Natural killer cell (primary cell): ENCODE measurements at regions of chrX and their contacts with region 1.

Region 1: GRCh38 chrX:23782863-23783568 is at the start of gene SAT1:
- DNase-seq: peak; percentile 89 to 95
- ATAC-seq: peak; percentile 81 to 94 (median 88)
- H3K4me3 ChIP-seq: peak within 1 kb of the TSS; percentile 97
- H3K4me3 Mint-ChIP-seq: peak within 1 kb of the TSS; percentile 95
- H3K27ac ChIP-seq: peak within 1 kb of the TSS; percentile 97
- H3K27ac Mint-ChIP-seq: peak within 1 kb of the TSS; percentile 93 to 95
- H3K4me1 ChIP-seq: peaks cover 20% of the 10 kb centered on the region
- H3K4me1 Mint-ChIP-seq: peaks cover 27 to 36% of the 10 kb centered on the region in 2 donors
- H3K27me3 ChIP-seq: no peaks in the 10 kb centered on the region
- H3K27me3 Mint-ChIP-seq: no peaks in the 10 kb centered on the region
- CTCF ChIP-seq: peak; percentile 68
- total RNA-seq, gene SAT1: 276 to 667 (median 524) TPM

Region 2: GRCh38 chrX:23598561-23598960 is 184.5 kb before region 1 on chrX:
- intact Hi-C with region 1: no loop called
- DNase-seq: no peak
- ATAC-seq: no peak
- H3K4me3 ChIP-seq: no peak overlapping the region
- H3K4me3 Mint-ChIP-seq: no peak overlapping the region
- H3K27ac ChIP-seq: no peak overlapping the region
- H3K27ac Mint-ChIP-seq: no peak overlapping the region
- H3K4me1 ChIP-seq: no peaks in the 10 kb centered on the region
- H3K4me1 Mint-ChIP-seq: no peaks in the 10 kb centered on the region
- H3K27me3 ChIP-seq: no peaks in the 10 kb centered on the region
- H3K27me3 Mint-ChIP-seq: peaks cover 2 to 19% of the 10 kb centered on the region in 2 donors
- CTCF ChIP-seq: no peak

Region 3: DNA sequence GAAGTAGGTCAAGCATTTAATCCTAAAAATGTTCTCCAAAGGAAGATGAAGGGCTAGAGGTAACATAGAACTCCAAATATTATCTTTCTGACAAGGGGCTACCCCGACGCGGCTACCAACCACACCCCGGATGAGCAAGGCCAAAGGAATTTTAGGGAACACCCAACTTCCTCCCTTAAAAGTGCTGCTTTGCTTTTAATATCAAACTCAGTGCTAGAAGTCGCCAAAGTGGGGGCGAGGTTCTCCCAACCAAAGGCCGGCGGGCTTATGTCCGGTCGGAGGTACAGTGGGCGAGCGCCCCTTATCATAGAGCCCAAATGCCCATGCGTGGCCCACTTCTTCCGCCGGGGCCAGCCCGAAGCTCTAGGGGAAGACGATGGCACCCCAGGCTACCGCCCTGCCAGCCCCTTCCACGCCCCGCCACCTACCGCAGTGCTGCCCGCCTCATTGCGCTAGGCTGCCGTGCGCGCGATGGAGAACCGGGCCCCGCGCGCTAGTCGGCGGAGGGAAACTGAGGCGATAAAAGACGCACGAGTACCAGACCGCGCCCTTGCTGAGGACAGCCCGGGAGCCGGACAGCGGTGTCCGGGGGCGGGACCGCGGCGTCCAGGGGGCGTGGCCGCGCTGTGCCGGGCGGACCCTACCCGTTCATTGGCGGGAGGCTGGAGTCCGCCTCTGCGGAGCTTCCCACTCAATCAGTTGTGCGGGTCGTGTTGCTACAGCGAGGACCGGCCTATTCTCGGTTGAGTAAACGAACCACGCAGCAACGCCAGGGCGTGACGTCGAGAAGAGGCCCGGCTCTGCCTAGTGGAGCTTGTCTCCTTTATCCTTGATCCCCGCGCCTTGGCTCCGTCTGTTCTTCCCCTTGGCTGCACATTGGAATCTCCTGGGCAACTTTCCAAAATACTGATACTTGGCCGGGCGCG is 40.1 kb before region 1 on chrX and contains the start of gene ACOT9:
- intact Hi-C with region 1: loop called (anchors 5 kb)
- DNase-seq: peak; percentile 69 to 76
- ATAC-seq: peak; percentile 95 to 99 (median 95)
- H3K4me3 ChIP-seq: peak within 1 kb of the TSS; percentile 69
- H3K4me3 Mint-ChIP-seq: peak within 1 kb of the TSS; percentile 81
- H3K27ac ChIP-seq: peak within 1 kb of the TSS; percentile 77
- H3K27ac Mint-ChIP-seq: peak within 1 kb of the TSS; percentile 54 to 87
- H3K4me1 ChIP-seq: peaks cover 27% of the 10 kb centered on the region
- H3K4me1 Mint-ChIP-seq: peaks cover 14 to 16% of the 10 kb centered on the region in 2 donors
- H3K27me3 ChIP-seq: no peaks in the 10 kb centered on the region
- H3K27me3 Mint-ChIP-seq: no peaks in the 10 kb centered on the region
- CTCF ChIP-seq: no peak
- total RNA-seq, gene ACOT9: 20.0 to 24.9 (median 21.4) TPM

Region 4: GRCh38 chrX:23766650-23767551 is 16.1 kb before region 1 on chrX:
- intact Hi-C with region 1: loop called (anchors 1 kb)
- DNase-seq: peak in 1 of 2 donors; percentile 38
- ATAC-seq: peak; percentile 62 to 94 (median 88)
- H3K4me3 ChIP-seq: peak overlapping the region; percentile 27
- H3K4me3 Mint-ChIP-seq: peak overlapping the region; percentile 45
- H3K27ac ChIP-seq: peak overlapping the region; percentile 59
- H3K27ac Mint-ChIP-seq: peak overlapping the region; percentile 16 to 89
- H3K4me1 ChIP-seq: peaks cover 5% of the 10 kb centered on the region
- H3K4me1 Mint-ChIP-seq: peaks cover 0 to 9% of the 10 kb centered on the region in 2 donors
- H3K27me3 ChIP-seq: no peaks in the 10 kb centered on the region
- H3K27me3 Mint-ChIP-seq: no peaks in the 10 kb centered on the region
- CTCF ChIP-seq: no peak

Region 5: DNA sequence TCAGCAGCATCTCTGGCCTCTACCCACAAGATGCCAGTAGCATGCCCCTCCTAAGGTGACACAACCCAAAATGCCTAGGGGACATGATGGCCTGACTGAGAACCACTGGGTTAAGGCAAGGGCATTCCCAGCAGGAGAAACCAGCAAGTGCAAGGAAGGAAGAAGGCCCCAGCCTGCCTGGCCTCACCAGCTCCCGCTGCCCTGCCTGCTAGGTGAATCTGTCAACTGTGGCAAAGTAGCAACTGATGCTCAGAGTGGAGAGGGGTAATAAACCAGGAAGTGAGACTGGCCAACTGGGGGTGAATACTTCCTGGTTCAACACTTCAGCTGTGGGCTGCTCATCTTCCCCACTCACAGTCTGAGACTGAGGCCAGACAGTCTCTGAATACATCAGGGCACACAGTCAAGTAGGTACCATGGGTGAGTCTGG is 34.2 kb after region 1 on chrX:
- intact Hi-C with region 1: no loop called
- DNase-seq: peak in 1 of 2 donors; percentile 2
- ATAC-seq: peak; percentile 30 to 55 (median 36)
- H3K4me3 ChIP-seq: no peak overlapping the region
- H3K4me3 Mint-ChIP-seq: no peak overlapping the region
- H3K27ac ChIP-seq: no peak overlapping the region
- H3K27ac Mint-ChIP-seq: no peak overlapping the region
- H3K4me1 ChIP-seq: peaks cover 8% of the 10 kb centered on the region
- H3K4me1 Mint-ChIP-seq: no peaks in the 10 kb centered on the region
- H3K27me3 ChIP-seq: no peaks in the 10 kb centered on the region
- H3K27me3 Mint-ChIP-seq: no peaks in the 10 kb centered on the region
- CTCF ChIP-seq: no peak

Region 6: DNA sequence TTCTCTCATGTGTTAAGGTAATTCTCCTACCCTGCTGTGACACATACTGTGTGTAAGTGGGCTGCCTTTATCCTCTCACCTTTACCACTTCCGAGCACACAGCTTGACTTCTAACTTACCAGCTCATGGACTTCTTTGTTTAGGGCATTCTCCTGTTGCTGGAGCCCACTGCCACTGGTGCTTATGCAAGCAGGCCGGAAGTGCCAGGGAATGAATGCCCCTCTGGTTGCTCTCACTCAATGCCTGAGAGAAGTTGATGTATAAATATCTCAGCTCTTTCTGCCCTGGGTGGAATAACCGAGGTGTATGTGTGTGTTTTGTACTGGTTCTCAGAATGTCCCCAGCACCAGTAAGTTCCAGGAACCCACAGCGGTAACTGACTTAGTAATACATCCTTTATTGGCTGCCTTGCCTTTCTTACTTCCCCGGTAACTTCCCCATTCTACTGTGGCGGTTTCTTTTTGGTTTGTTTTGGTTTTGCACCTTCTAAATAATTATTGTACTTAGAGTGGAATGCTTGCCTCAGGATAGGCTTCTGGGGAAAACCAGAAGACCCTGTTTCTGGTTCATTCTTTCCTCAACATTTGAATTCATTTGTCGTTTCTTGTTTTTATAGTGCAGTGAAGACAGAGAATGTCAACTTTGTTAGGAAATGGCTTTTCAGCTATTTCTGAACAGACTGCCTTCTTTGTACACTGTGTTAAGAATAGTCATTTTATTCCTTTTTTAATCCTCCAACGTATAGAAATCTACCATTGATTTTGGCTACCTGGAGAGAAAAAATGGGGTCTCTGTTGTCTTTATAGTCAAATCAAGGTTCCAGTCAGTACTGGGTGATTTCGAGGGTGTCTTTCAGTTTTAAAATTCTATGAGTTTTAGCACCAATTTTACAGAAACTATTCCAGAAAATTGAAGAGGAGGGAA is 170.2 kb after region 1 on chrX:
- intact Hi-C with region 1: loop called (anchors 5 kb)
- DNase-seq: peak; percentile 26 to 66
- ATAC-seq: peak; percentile 85 to 88 (median 86)
- H3K4me3 ChIP-seq: peak overlapping the region; percentile 27
- H3K4me3 Mint-ChIP-seq: peak overlapping the region; percentile 93
- H3K27ac ChIP-seq: peak overlapping the region; percentile 82
- H3K27ac Mint-ChIP-seq: peak overlapping the region; percentile 91 to 92
- H3K4me1 ChIP-seq: peaks cover 9% of the 10 kb centered on the region
- H3K4me1 Mint-ChIP-seq: peaks cover 14 to 16% of the 10 kb centered on the region in 2 donors
- H3K27me3 ChIP-seq: no peaks in the 10 kb centered on the region
- H3K27me3 Mint-ChIP-seq: no peaks in the 10 kb centered on the region
- CTCF ChIP-seq: no peak

Region 7: GRCh38 chrX:24150051-24150790 is 367.2 kb after region 1 on chrX:
- intact Hi-C with region 1: loop called (anchors 5 kb)
- DNase-seq: peak; percentile 71 to 91
- ATAC-seq: peak; percentile 73 to 89 (median 78)
- H3K4me3 ChIP-seq: peak overlapping the region; percentile 68
- H3K4me3 Mint-ChIP-seq: peak overlapping the region; percentile 96
- H3K27ac ChIP-seq: peak overlapping the region; percentile 94
- H3K27ac Mint-ChIP-seq: peak overlapping the region; percentile 83 to 93
- H3K4me1 ChIP-seq: peaks cover 24% of the 10 kb centered on the region
- H3K4me1 Mint-ChIP-seq: peaks cover 33 to 58% of the 10 kb centered on the region in 2 donors
- H3K27me3 ChIP-seq: no peaks in the 10 kb centered on the region
- H3K27me3 Mint-ChIP-seq: no peaks in the 10 kb centered on the region
- CTCF ChIP-seq: peak; percentile 16

Region 8: DNA sequence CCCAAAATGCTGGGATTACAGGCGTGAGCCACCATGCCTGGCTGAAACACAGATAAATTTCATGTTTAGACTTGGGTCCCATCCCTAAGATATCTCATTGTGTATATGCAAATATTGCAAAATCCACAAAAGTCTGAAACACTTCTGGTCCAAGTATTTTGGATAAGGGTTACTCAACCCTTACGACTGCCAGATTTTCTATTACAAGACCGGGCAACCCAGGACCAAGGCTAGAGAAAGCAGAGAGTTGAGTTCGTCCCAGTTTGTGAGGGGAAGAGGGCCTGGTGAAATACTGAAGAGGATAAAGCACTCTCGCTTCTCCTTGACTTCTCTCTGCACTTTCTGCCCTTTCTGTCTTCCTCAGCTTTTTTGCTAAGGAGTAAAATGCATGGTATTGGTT is 401.0 kb after region 1 on chrX:
- intact Hi-C with region 1: no loop called
- DNase-seq: no peak
- ATAC-seq: no peak
- H3K4me3 ChIP-seq: no peak overlapping the region
- H3K4me3 Mint-ChIP-seq: no peak overlapping the region
- H3K27ac ChIP-seq: no peak overlapping the region
- H3K27ac Mint-ChIP-seq: peak overlapping the region; percentile 22 to 27
- H3K4me1 ChIP-seq: peaks cover 5% of the 10 kb centered on the region
- H3K4me1 Mint-ChIP-seq: peaks cover 21 to 28% of the 10 kb centered on the region in 2 donors
- H3K27me3 ChIP-seq: no peaks in the 10 kb centered on the region
- H3K27me3 Mint-ChIP-seq: no peaks in the 10 kb centered on the region
- CTCF ChIP-seq: no peak